ENCODE measurements at regions of chr19 and their contacts with region 1.

Region 1: GRCh38 chr19:54189735-54190502 is 539 bp upstream of the MBOAT7 start:
- DNase-seq: peak; percentile 100
- ATAC-seq: peak; percentile 72 to 75
- H3K4me3 ChIP-seq: peak overlapping the region; percentile 72 to 95 (median 89)
- H3K27ac ChIP-seq: peak overlapping the region; percentile 92 to 98 (median 95)
- H3K4me1 ChIP-seq: peaks cover 15 to 20% of the 10 kb centered on the region in 2 donors
- H3K27me3 ChIP-seq: no peaks in the 10 kb centered on the region
- CTCF ChIP-seq: no peak
- POLR2A ChIP-seq: peak; percentile 58 to 72

Region 2: DNA sequence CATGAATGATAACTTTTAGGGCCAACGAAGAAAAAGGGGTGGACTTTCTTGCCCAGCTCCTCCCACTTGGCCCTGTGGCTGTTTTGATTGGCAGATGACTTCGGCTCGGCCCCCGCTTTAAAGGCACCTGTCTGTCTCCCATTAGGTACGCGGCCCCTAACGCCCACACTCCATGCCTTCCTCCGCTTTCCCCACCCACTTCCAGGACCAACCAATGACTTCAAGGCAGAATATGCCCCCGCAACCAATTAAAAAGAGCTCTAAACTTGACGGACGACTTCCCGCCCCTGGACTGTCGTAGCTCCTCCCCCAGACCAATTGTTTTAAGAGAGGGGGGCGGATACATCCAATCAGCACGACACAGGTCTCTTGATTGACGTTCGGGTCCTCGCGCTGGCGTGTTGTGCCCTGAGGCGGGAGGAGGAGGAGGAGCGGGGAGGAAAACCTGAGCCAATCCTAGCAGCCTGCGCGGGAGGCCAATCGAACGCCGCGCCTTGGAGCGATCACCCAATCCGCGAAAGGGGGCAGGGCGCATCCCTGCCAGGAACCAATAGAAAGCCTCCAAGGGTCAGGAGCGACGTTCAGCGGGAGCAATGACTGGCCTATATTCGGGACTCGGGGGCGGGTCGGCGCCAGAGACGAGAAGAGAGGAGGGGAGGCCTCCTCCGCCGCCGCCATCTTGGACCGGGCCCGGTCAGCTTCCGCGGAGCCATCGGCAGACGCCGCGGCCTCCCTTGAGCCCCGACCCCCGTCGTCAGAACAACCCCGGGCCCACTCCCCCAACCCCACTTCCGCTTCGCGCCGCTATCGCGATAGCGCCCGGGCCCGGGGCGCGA is 52.6 kb before region 1 on chr19 and contains the start of gene CNOT3:
- in situ Hi-C with region 1: no loop called
- intact Hi-C with region 1: loop called (anchors 1 kb)
- DNase-seq: peak; percentile 100
- ATAC-seq: peak; percentile 90 to 94
- H3K4me3 ChIP-seq: peak within 1 kb of the TSS; percentile 86 to 99 (median 92)
- H3K27ac ChIP-seq: peak within 1 kb of the TSS; percentile 97 to 100 (median 98)
- H3K4me1 ChIP-seq: peaks cover 29 to 44% of the 10 kb centered on the region in 2 donors
- H3K27me3 ChIP-seq: no peaks in the 10 kb centered on the region
- CTCF ChIP-seq: no peak
- POLR2A ChIP-seq: peak; percentile 94 to 98
- total RNA-seq, gene CNOT3: 5.1 to 14.0 (median 10.2) TPM

Region 3: DNA sequence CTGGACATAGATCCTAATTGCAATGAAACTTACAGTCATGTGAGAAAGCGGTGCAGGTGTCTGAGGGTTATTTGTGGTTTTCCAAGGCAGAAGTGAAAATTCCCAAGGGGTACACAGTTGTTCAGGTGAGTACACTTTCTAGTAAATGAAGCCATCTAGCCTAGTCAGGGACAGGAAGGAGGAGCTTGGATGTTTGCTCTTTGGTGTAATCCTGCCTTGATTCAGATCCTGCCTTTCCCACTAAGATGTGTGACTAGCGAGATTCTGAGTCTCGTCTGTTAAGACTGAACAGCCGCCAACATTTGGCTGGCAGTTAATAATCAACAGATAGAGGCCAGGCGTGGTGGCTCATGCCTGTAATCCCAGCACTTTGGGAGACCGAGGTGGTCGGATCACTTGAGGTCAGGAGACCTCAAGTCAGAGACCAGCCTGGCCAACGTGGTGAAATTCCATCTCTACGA is 13.3 kb after region 1 on chr19:
- in situ Hi-C with region 1: no loop called
- intact Hi-C with region 1: loop called (anchors 1 kb)
- DNase-seq: no peak
- ATAC-seq: no peak
- H3K4me3 ChIP-seq: peak overlapping the region in 2 of 4 donors; percentile 76 to 78
- H3K27ac ChIP-seq: peak overlapping the region; percentile 63 to 95 (median 92)
- H3K4me1 ChIP-seq: peaks cover 60 to 63% of the 10 kb centered on the region in 2 donors
- H3K27me3 ChIP-seq: no peaks in the 10 kb centered on the region
- CTCF ChIP-seq: no peak
- POLR2A ChIP-seq: no peak

Region 4: GRCh38 chr19:54231077-54231931 is 41.4 kb after region 1 on chr19:
- in situ Hi-C with region 1: no loop called
- intact Hi-C with region 1: loop called (anchors 1 kb)
- DNase-seq: peak; percentile 34 to 52
- ATAC-seq: peak; percentile 47 to 85
- H3K4me3 ChIP-seq: no peak overlapping the region
- H3K27ac ChIP-seq: no peak overlapping the region
- H3K4me1 ChIP-seq: no peaks in the 10 kb centered on the region
- H3K27me3 ChIP-seq: peaks cover 0 to 6% (median 5%) of the 10 kb centered on the region in 3 donors
- CTCF ChIP-seq: peak; percentile 62 to 87 (median 81)
- POLR2A ChIP-seq: no peak